Right cardiac atrium (tissue), 5 donors: ENCODE measurements at regions of chr2 and their contacts with region 1.

Region 1: GRCh38 chr2:232327105-232328041 is 51.2 kb upstream of the ALPP start:
- DNase-seq: peak; percentile 58 to 88 (median 83)
- ATAC-seq: peak; percentile 40 to 73
- H3K4me3 ChIP-seq: no peak overlapping the region
- H3K27ac ChIP-seq: no peak overlapping the region
- H3K4me1 ChIP-seq: no peaks in the 10 kb centered on the region
- H3K27me3 ChIP-seq: no peaks in the 10 kb centered on the region

Region 2: DNA sequence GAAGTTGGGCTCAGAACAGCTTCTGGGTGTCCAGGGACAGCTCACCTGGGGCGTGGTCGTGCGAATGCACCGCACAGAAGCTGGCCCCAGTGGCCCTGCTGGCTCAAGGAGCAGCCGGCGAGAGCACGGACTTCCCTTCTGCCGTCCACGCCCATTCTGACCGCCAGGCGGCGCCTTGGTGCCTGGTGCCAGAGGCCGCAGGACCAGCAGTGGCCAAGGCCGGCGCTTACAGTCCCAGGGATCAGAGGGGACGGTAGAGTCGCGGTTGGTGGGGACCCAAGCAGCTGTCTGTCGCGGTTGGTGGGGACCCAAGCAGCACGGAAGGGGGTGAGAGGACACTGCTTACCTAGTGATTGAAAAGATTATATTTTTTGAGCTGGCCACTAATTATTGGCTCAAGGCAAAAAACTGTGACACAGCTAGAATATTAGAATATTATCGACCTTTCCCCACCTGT is 426.9 kb before region 1 on chr2:
- intact Hi-C with region 1: loop called in 1 of 4 experiments (anchors 5 kb)
- DNase-seq: peak; percentile 81 to 91 (median 89)
- ATAC-seq: peak; percentile 71 to 88
- H3K4me3 ChIP-seq: no peak overlapping the region
- H3K27ac ChIP-seq: no peak overlapping the region
- H3K4me1 ChIP-seq: no peaks in the 10 kb centered on the region
- H3K27me3 ChIP-seq: no peaks in the 10 kb centered on the region

Region 3: GRCh38 chr2:231925303-231926179 is 401.8 kb before region 1 on chr2:
- intact Hi-C with region 1: loop called in 2 of 4 experiments (anchors 5 to 10 kb)
- DNase-seq: peak; percentile 89 to 95 (median 94)
- ATAC-seq: peak; percentile 89 to 94
- H3K4me3 ChIP-seq: peak overlapping the region; percentile 18
- H3K27ac ChIP-seq: no peak overlapping the region
- H3K4me1 ChIP-seq: peaks cover 2% of the 10 kb centered on the region
- H3K27me3 ChIP-seq: no peaks in the 10 kb centered on the region

Region 4: DNA sequence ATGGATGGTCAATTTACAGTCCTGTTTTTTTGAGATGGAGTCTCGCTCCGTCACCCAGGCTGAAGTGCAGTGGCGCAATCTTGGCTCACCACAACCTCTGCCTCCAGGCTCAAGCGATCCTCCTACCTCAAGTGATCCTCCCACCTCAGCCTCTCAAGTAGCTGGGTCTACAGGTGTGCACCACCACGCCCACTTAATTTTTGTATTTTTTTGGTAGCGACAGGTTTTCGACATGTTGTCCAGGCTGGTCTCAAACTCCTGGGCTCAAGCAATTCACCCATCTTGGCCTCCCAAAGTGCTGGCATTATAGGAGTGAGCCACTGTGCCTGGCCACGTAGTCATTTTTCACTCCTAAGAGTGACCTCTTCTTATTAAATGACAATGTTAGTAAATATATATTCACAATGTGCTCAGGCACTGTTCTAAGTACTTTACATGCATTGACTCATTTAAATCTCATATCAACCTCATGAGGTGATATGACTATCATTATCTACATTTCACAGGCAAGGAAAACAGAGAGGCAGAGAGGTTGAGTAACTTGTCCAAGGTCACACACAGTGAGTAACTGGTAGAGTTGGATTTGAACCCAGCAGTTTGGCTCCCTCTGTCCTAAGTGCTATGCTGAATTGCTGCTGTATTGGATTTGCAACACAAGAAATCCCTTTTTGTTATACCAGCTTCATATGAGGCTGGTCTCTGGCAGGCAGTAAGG is 371.5 kb before region 1 on chr2:
- intact Hi-C with region 1: no loop called
- DNase-seq: no peak
- ATAC-seq: no peak
- H3K4me3 ChIP-seq: no peak overlapping the region
- H3K27ac ChIP-seq: no peak overlapping the region
- H3K4me1 ChIP-seq: no peaks in the 10 kb centered on the region
- H3K27me3 ChIP-seq: no peaks in the 10 kb centered on the region

Region 5: DNA sequence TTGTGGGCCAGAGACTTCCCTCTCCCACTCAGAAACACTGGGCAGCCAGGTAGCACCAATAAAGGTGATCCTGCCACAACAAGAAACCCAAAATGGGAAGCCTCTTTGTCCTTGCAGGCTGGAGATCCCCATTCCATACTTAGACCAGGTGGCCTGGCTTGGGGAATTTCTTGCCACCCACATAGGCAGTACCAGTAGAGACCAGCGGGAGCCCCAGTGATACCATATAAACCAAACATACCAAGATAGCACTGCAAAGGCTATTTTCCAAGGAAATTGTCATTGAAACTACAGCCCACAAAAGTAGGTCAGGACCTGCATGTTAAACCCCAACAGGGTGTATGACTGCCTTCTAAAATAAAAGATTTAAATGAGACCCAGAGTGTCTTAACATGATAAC is 194.3 kb before region 1 on chr2:
- intact Hi-C with region 1: loop called in 1 of 4 experiments (anchors 10 kb)
- DNase-seq: no peak
- ATAC-seq: no peak
- H3K4me3 ChIP-seq: no peak overlapping the region
- H3K27ac ChIP-seq: no peak overlapping the region
- H3K4me1 ChIP-seq: no peaks in the 10 kb centered on the region
- H3K27me3 ChIP-seq: no peaks in the 10 kb centered on the region

Region 6: DNA sequence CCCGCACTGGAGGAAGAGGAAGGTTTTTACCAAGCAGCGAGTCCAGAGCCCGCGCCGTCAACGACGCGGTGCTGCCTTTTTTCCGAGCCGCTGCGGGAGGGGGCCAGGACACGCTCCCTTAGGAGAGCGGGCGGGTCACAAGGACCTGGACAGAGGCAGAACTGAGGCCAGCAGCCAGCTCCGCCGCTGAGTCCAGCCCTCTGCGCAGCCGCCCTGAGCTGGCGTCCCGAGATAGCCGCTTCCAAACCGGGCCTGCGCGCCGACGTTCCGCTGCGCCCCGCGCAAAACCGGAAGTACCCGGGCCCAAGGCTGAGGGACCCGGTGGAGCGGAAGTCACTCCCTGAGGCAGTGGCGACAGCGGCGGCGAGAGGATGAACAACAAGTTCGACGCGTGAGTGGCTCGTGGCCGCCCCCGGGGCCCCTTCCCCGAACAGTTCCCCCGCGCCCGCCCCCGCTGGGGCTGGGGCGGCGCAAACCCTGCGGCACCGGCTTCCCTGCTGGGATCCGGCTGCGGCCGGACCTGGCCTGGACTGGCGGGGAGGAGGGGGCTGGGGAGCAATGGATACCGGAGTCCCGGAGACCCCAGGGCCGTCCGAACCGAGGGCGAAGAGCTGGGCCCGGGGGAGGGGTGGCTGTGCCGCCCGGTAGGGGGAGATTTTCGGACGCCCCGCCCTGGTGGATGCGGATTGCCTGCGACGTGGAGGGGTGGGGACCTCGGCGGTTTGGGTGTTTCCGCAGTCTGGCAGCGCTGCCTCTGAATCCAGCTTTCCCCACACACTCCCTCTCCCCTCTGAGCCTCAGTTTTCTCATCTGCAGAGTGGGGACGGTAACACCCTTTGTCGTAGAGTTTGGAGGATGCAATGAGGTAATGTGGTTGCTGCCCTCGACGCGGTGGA is 223.2 kb after region 1 on chr2 and contains the starts of genes EIF4E2 and TIGD1:
- intact Hi-C with region 1: no loop called
- DNase-seq: peak; percentile 95 to 98 (median 98)
- ATAC-seq: peak; percentile 98
- H3K4me3 ChIP-seq: peak within 1 kb of the TSS; percentile 86
- H3K27ac ChIP-seq: peak within 1 kb of the TSS; percentile 96
- H3K4me1 ChIP-seq: no peaks in the 10 kb centered on the region
- H3K27me3 ChIP-seq: no peaks in the 10 kb centered on the region
- total RNA-seq, gene EIF4E2: 32.1 to 49.4 (median 45.9) TPM
- total RNA-seq, gene TIGD1: 2.6 to 3.3 (median 3.2) TPM